ENCODE measurements at regions of chr11 and their contacts with region 1.

Region 1: GRCh38 chr11:118002541-118003423 is 16.6 kb downstream of the IL10RA start:
- DNase-seq: peak; percentile 70
- ATAC-seq: peak; percentile 41
- H3K4me3 Mint-ChIP-seq: peak overlapping the region; percentile 65
- H3K27ac Mint-ChIP-seq: peak overlapping the region; percentile 96
- H3K4me1 Mint-ChIP-seq: peaks cover 83% of the 10 kb centered on the region
- H3K27me3 Mint-ChIP-seq: no peaks in the 10 kb centered on the region

Region 2: GRCh38 chr11:117817368-117818040 is 185.3 kb before region 1 on chr11:
- POLR2A ChIA-PET with region 1: interaction called, 22 read pairs
- DNase-seq: peak; percentile 88
- ATAC-seq: peak; percentile 27
- H3K4me3 Mint-ChIP-seq: peak overlapping the region; percentile 79
- H3K27ac Mint-ChIP-seq: peak overlapping the region; percentile 98
- H3K4me1 Mint-ChIP-seq: peaks cover 57% of the 10 kb centered on the region
- H3K27me3 Mint-ChIP-seq: no peaks in the 10 kb centered on the region

Region 3: GRCh38 chr11:117907251-117907981 is 95.4 kb before region 1 on chr11:
- POLR2A ChIA-PET with region 1: no interaction called
- DNase-seq: peak; percentile 71
- ATAC-seq: peak; percentile 88
- H3K4me3 Mint-ChIP-seq: peak overlapping the region; percentile 11
- H3K27ac Mint-ChIP-seq: peak overlapping the region; percentile 17
- H3K4me1 Mint-ChIP-seq: peaks cover 17% of the 10 kb centered on the region
- H3K27me3 Mint-ChIP-seq: no peaks in the 10 kb centered on the region

Region 4: DNA sequence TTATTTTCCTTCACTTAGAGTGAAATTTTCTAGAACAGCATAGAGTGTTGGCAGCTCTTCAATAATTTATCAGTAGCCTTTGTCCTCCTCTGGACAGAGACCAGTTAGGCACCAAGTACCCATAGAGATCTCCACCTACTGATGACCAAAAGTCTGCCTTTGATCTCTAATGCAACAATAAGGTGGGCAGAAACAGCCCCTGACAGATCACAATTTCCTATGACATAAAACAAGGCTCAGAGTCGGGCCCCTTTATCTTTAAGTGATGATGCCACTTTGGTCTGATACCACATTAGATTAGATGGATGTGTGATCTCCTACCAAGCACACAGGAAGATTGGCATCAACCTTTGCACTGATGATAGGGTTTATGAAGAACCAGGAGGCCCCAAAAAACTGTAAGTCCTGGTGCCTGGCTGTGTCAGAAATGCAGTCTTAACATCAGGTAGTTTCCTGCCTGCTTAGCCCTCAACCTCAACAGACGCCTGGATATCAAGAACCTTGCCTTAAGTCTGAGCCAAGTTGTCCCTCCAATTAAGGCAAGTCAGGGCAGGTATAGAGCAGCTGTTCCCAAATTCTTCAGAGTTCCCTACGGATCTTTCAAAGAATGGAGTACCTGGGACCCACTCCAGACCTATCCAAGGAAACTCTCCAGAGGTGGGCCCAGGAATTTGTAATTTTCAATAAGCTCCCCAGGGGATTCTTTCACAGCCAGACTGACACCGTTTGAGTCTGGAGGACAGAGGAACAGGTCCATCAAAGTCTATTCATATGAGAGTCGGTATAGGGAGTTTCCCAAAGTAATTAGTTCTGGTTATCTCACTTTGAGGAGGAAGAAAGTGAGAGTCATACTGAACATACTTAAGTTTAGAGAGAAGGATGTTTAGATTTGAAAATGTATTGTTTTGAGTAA is 43.5 kb after region 1 on chr11:
- POLR2A ChIA-PET with region 1: interaction called, 128 read pairs
- DNase-seq: no peak
- ATAC-seq: peak; percentile 61
- H3K4me3 Mint-ChIP-seq: peak overlapping the region; percentile 26
- H3K27ac Mint-ChIP-seq: peak overlapping the region; percentile 91
- H3K4me1 Mint-ChIP-seq: peaks cover 72% of the 10 kb centered on the region
- H3K27me3 Mint-ChIP-seq: no peaks in the 10 kb centered on the region

Region 5: GRCh38 chr11:118109231-118109630 is 106.4 kb after region 1 on chr11:
- POLR2A ChIA-PET with region 1: no interaction called
- DNase-seq: no peak
- ATAC-seq: no peak
- H3K4me3 Mint-ChIP-seq: no peak overlapping the region
- H3K27ac Mint-ChIP-seq: no peak overlapping the region
- H3K4me1 Mint-ChIP-seq: peaks cover 20% of the 10 kb centered on the region
- H3K27me3 Mint-ChIP-seq: peaks cover 11% of the 10 kb centered on the region